Ascending aorta (tissue), 2 donors: ENCODE measurements at regions of chr22 and their contacts with region 1.

Region 1: GRCh38 chr22:20916983-20917810 is at the start of gene CRKL:
- DNase-seq: peak; percentile 88 to 98
- H3K4me3 ChIP-seq: peak within 1 kb of the TSS; percentile 95 to 100
- H3K27ac ChIP-seq: peak within 1 kb of the TSS; percentile 92 to 96
- H3K4me1 ChIP-seq: peaks cover 5 to 10% of the 10 kb centered on the region in 2 donors
- H3K27me3 ChIP-seq: no peaks in the 10 kb centered on the region
- CTCF ChIP-seq: peak; percentile 93 to 97 (median 96)
- total RNA-seq, gene CRKL: 21.2 TPM

Region 2: GRCh38 chr22:20852076-20852475 is 65.1 kb before region 1 on chr22:
- intact Hi-C with region 1: no loop called
- DNase-seq: no peak
- H3K4me3 ChIP-seq: no peak overlapping the region
- H3K27ac ChIP-seq: no peak overlapping the region
- H3K4me1 ChIP-seq: peaks cover 0 to 15% of the 10 kb centered on the region in 2 donors
- H3K27me3 ChIP-seq: no peaks in the 10 kb centered on the region
- CTCF ChIP-seq: no peak

Region 3: GRCh38 chr22:20885557-20886323 is 31.5 kb before region 1 on chr22:
- intact Hi-C with region 1: loop called (anchors 2 kb)
- DNase-seq: peak; percentile 13 to 84
- H3K4me3 ChIP-seq: no peak overlapping the region
- H3K27ac ChIP-seq: peak overlapping the region; percentile 54 to 67
- H3K4me1 ChIP-seq: no peaks in the 10 kb centered on the region
- H3K27me3 ChIP-seq: no peaks in the 10 kb centered on the region
- CTCF ChIP-seq: peak; percentile 72 to 81 (median 72)

Region 4: DNA sequence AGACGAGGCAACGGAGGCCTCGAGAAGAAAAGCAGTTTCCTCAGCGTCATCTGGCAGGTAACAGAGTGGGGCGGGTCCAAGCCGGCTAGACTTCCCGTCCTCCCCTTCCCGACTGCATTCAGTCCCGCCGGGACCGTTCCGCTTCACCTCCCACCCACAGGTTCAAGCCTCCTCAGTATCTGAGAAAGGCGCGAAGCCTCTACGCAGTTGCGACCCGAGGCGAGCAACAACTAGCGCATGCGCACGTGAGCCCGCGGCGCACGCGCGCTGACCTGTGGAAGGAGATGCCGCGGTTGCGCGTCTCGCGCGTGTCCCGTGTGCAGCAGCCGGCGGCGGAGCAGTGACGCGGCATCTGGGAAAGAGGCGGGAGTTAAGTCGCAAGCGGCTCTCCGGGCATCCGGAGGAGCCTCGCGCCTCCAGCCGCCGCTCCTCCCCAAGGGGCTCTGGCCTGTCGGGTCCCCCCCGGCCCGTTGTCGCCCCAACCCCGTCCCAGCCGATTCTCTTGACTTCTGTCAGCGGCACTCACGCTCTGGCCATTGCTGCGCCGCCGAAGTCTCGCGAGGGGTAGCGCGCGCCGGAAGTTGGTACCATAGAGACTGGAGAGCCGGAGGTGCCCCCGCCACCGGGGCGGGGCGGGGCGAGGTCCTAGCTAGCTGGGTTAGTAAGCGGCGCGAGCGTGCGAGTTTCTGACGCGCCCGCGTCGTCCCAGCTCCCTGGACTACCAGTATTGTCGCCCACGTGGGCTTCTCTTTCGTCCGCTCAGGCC is 84.5 kb after region 1 on chr22 and contains the start of gene THAP7:
- intact Hi-C with region 1: loop called (anchors 10 kb)
- DNase-seq: peak; percentile 91 to 99
- H3K4me3 ChIP-seq: peak within 1 kb of the TSS; percentile 70 to 94
- H3K27ac ChIP-seq: peak within 1 kb of the TSS; percentile 97 to 98
- H3K4me1 ChIP-seq: peaks cover 13 to 30% of the 10 kb centered on the region in 2 donors
- H3K27me3 ChIP-seq: no peaks in the 10 kb centered on the region
- CTCF ChIP-seq: no peak
- total RNA-seq, gene THAP7: 37.9 TPM

Region 5: GRCh38 chr22:21641789-21642583 is 724.8 kb after region 1 on chr22 and contains the start of gene SDF2L1:
- intact Hi-C with region 1: loop called (anchors 10 kb)
- DNase-seq: peak; percentile 98 to 100
- H3K4me3 ChIP-seq: peak within 1 kb of the TSS; percentile 63 to 83
- H3K27ac ChIP-seq: peak within 1 kb of the TSS; percentile 69 to 80
- H3K4me1 ChIP-seq: peaks cover 0 to 14% of the 10 kb centered on the region in 2 donors
- H3K27me3 ChIP-seq: no peaks in the 10 kb centered on the region
- CTCF ChIP-seq: peak in 2 of 3 experiments; percentile 10 to 16
- total RNA-seq, gene SDF2L1: 37.4 TPM